ENCODE measurements at regions of chr1 and their contacts with region 1.

Region 1: DNA sequence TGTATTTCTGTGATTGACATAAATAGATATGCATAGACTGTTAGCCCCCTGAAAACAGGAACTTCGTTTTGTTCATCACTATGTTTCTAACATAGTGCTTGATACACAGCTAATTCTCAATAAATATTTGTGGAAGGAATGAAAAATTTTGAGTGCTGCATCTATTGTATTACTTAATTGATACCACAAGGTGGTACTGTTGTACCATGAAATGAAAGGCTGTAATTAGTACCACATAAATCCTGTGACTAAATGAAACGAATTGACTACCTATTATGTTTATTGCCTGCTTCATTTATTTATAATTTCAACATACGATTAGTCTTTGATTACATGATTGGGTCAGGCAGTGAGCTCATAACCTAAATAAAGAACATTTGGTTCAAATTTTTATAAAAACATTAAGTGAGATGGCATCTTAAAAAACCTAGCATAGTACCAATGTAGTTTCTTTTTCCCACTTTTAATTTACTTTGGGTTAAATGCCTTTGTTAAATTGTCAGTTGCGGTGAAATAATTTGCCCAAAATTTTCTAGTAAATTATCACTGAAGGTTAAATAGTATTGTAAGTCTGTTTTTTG is 15.0 kb upstream of the TGFB2 start:
- DNase-seq: peak in 1 of 2 experiments; percentile 48
- H3K4me3 ChIP-seq: no peak overlapping the region
- H3K27ac ChIP-seq: no peak overlapping the region
- H3K4me1 ChIP-seq: peaks cover 9% of the 10 kb centered on the region; the same call in 1 of the 2 replicates
- H3K27me3 ChIP-seq: no peaks in the 10 kb centered on the region
- CTCF ChIP-seq: peak; percentile 91

Region 2: GRCh38 chr1:219066631-219067349 is 736.7 kb after region 1 on chr1:
- CTCF ChIA-PET with region 1: interaction called, 11 read pairs
- POLR2A ChIA-PET with region 1: no interaction called
- intact Hi-C with region 1: loop called (anchors 2 kb)
- DNase-seq: peak; percentile 2 to 78
- H3K4me3 ChIP-seq: no peak overlapping the region
- H3K27ac ChIP-seq: peak overlapping the region; percentile 30
- H3K4me1 ChIP-seq: peaks cover 5% of the 10 kb centered on the region; the same call in 1 of the 2 replicates
- H3K27me3 ChIP-seq: no peaks in the 10 kb centered on the region
- CTCF ChIP-seq: peak; percentile 84

Region 3: GRCh38 chr1:219385786-219386427 is 1055.8 kb after region 1 on chr1:
- CTCF ChIA-PET with region 1: no interaction called
- POLR2A ChIA-PET with region 1: no interaction called
- intact Hi-C with region 1: loop called (anchors 5 kb)
- DNase-seq: peak; percentile 43 to 63
- H3K4me3 ChIP-seq: no peak overlapping the region
- H3K27ac ChIP-seq: no peak overlapping the region
- H3K4me1 ChIP-seq: peaks cover 6% of the 10 kb centered on the region; the same call in 1 of the 2 replicates
- H3K27me3 ChIP-seq: no peaks in the 10 kb centered on the region
- CTCF ChIP-seq: peak; percentile 79

Region 4: GRCh38 chr1:219566951-219567947 is 1237.1 kb after region 1 on chr1:
- CTCF ChIA-PET with region 1: no interaction called
- POLR2A ChIA-PET with region 1: no interaction called
- intact Hi-C with region 1: loop called (anchors 1 kb)
- DNase-seq: no peak
- H3K4me3 ChIP-seq: no peak overlapping the region
- H3K27ac ChIP-seq: no peak overlapping the region
- H3K4me1 ChIP-seq: peaks cover 19% of the 10 kb centered on the region
- H3K27me3 ChIP-seq: no peaks in the 10 kb centered on the region
- CTCF ChIP-seq: peak; percentile 65

Region 5: GRCh38 chr1:219812491-219813203 is 1482.5 kb after region 1 on chr1:
- CTCF ChIA-PET with region 1: interaction called, 10 read pairs
- POLR2A ChIA-PET with region 1: no interaction called
- intact Hi-C with region 1: loop called (anchors 1 kb)
- DNase-seq: peak; percentile 45 to 67
- H3K4me3 ChIP-seq: no peak overlapping the region
- H3K27ac ChIP-seq: no peak overlapping the region
- H3K4me1 ChIP-seq: no peaks in the 10 kb centered on the region
- H3K27me3 ChIP-seq: peaks cover 5% of the 10 kb centered on the region; the same call in 1 of the 2 replicates
- CTCF ChIP-seq: peak; percentile 93

Measured in PC-9 (cell line).